ENCODE measurements at regions of chr19 and their contacts with region 1.

Region 1: GRCh38 chr19:35975608-35976214 is 19.3 kb upstream of the SDHAF1 start:
- DNase-seq: peak in 1 of 2 experiments; percentile 46
- H3K4me3 ChIP-seq: no peak overlapping the region
- H3K4me3 Mint-ChIP-seq: no peak overlapping the region
- H3K27ac Mint-ChIP-seq: no peak overlapping the region
- H3K4me1 ChIP-seq: no peaks in the 10 kb centered on the region
- H3K4me1 Mint-ChIP-seq: no peaks in the 10 kb centered on the region
- H3K27me3 ChIP-seq: no peaks in the 10 kb centered on the region
- H3K27me3 Mint-ChIP-seq: peaks cover 11% of the 10 kb centered on the region
- CTCF ChIP-seq: no peak

Region 2: DNA sequence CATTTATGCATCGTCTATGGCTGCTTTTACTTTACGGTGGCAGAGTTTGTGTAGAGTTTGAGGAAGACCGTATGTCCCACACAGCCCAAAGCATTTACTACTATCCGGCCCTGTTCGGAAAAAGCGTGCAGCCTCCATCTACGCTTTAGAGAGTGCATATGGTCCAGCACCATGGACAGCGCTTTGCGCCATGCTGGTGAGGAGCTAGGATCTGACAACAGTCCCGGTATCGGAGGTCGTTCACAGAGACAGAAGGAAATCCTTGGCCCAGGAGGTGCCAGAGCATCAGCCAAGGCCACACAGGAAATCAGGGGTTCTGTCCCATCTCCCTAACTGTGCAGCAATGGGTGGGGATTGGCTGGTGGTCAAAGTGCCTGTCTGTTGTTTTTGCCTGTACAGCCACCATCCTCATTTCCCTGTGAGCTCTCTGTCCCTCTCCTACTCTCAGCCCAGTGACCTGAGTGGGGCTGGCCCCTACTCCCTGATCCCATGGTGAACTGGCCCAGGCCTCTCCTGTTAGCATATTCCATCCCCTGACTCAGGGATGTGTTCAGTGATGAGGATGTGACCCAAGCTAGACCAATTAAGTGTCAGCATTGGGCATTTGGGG is 146.9 kb before region 1 on chr19:
- CTCF ChIA-PET with region 1: no interaction called
- POLR2A ChIA-PET with region 1: no interaction called
- intact Hi-C with region 1: loop called (anchors 1 kb)
- DNase-seq: peak; percentile 76 to 82
- H3K4me3 ChIP-seq: no peak overlapping the region
- H3K4me3 Mint-ChIP-seq: no peak overlapping the region
- H3K27ac Mint-ChIP-seq: no peak overlapping the region
- H3K4me1 ChIP-seq: no peaks in the 10 kb centered on the region
- H3K4me1 Mint-ChIP-seq: no peaks in the 10 kb centered on the region
- H3K27me3 ChIP-seq: no peaks in the 10 kb centered on the region; the same call in 1 of the 2 replicates
- H3K27me3 Mint-ChIP-seq: peaks cover 32% of the 10 kb centered on the region
- CTCF ChIP-seq: no peak